ENCODE measurements at regions of chr4 and their contacts with region 1.

Region 1: GRCh38 chr4:167021545-167022155 is 212.6 kb downstream of the SPOCK3 start:
- DNase-seq: peak; percentile 7
- H3K4me3 ChIP-seq: no peak overlapping the region
- H3K27ac ChIP-seq: no peak overlapping the region
- H3K27me3 ChIP-seq: no peaks in the 10 kb centered on the region
- CTCF ChIP-seq: peak; percentile 80

Region 2: GRCh38 chr4:166198041-166198440 is 823.6 kb before region 1 on chr4:
- CTCF ChIA-PET with region 1: no interaction called
- POLR2A ChIA-PET with region 1: no interaction called
- DNase-seq: no peak
- H3K4me3 ChIP-seq: no peak overlapping the region
- H3K27ac ChIP-seq: no peak overlapping the region
- H3K27me3 ChIP-seq: no peaks in the 10 kb centered on the region
- CTCF ChIP-seq: no peak

Region 3: GRCh38 chr4:167032871-167033270 is 11.2 kb after region 1 on chr4:
- CTCF ChIA-PET with region 1: interaction called, 23 read pairs
- POLR2A ChIA-PET with region 1: no interaction called
- DNase-seq: no peak
- H3K4me3 ChIP-seq: no peak overlapping the region
- H3K27ac ChIP-seq: no peak overlapping the region
- H3K27me3 ChIP-seq: no peaks in the 10 kb centered on the region
- CTCF ChIP-seq: no peak

Measured in AG04450 (cell line).